ENCODE measurements at regions of chr20 and their contacts with region 1.

Region 1: DNA sequence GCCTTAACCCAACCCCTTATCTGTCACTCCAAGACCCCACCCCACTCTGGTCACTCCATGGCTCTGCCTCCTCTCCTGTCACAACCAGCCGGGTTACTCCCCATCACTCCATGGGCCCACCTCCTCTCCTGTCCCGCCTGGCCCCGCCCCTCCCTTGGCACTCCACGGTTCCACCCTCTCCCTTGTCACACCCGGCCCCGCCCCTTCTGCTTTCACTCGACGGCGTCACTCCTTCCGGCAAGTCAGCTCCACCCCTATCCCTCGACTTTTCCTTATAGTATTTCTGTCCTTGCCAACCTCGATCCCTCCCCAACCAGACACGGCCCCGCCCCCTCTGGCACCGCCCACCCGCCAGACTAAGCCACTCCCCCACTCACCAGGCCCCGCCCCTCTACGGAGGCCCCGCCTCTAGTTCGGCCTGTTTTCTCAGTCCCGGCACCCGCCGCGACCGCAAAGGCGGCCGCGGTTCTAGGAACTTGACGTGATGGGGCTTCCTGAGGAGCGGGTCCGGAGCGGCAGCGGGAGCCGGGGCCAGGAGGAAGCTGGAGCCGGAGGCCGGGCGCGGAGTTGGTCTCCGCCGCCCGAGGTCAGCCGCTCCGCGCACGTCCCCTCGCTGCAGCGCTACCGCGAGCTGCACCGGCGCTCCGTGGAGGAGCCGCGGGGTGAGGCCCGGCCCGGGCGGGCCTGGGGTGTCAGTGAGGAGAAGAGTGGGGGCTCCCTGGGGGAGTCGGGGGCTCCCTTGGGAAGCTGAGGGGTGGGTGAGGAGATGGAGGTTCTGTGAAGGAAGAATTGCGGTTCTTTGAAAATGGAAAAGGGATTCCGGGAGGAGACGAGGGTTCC is at the start of gene ACSS2:
- DNase-seq: peak; percentile 78 to 93 (median 92)
- H3K4me3 ChIP-seq: peak within 1 kb of the TSS; percentile 67
- H3K4me3 Mint-ChIP-seq: peak within 1 kb of the TSS; percentile 85 to 93 (median 88)
- H3K27ac ChIP-seq: peak within 1 kb of the TSS; percentile 59
- H3K27ac Mint-ChIP-seq: peak within 1 kb of the TSS; percentile 0 to 96 (median 83)
- H3K4me1 ChIP-seq: peaks cover 51% of the 10 kb centered on the region
- H3K4me1 Mint-ChIP-seq: peaks cover 47 to 56% (median 50%) of the 10 kb centered on the region in 3 donors
- H3K27me3 ChIP-seq: no peaks in the 10 kb centered on the region
- H3K27me3 Mint-ChIP-seq: peaks cover 0 to 4% of the 10 kb centered on the region in 2 donors
- total RNA-seq, gene ACSS2: 6.0 to 7.2 TPM

Region 2: GRCh38 chr20:34736106-34736735 is 140.2 kb before region 1 on chr20:
- CTCF ChIA-PET with region 1: no interaction called
- POLR2A ChIA-PET with region 1: no interaction called
- DNase-seq: no peak
- H3K4me3 ChIP-seq: no peak overlapping the region
- H3K4me3 Mint-ChIP-seq: no peak overlapping the region
- H3K27ac ChIP-seq: no peak overlapping the region
- H3K27ac Mint-ChIP-seq: no peak overlapping the region
- H3K4me1 ChIP-seq: no peaks in the 10 kb centered on the region
- H3K4me1 Mint-ChIP-seq: no peaks in the 10 kb centered on the region
- H3K27me3 ChIP-seq: no peaks in the 10 kb centered on the region
- H3K27me3 Mint-ChIP-seq: peaks cover 0 to 3% of the 10 kb centered on the region in 2 donors

Region 3: GRCh38 chr20:35232575-35232974 is 356.2 kb after region 1 on chr20:
- CTCF ChIA-PET with region 1: interaction called, 3 read pairs
- POLR2A ChIA-PET with region 1: interaction called, 11 read pairs
- DNase-seq: no peak
- H3K4me3 ChIP-seq: no peak overlapping the region
- H3K4me3 Mint-ChIP-seq: no peak overlapping the region
- H3K27ac ChIP-seq: no peak overlapping the region
- H3K27ac Mint-ChIP-seq: no peak overlapping the region
- H3K4me1 ChIP-seq: no peaks in the 10 kb centered on the region
- H3K4me1 Mint-ChIP-seq: peaks cover 0 to under 1% (median under 1%) of the 10 kb centered on the region in 3 donors
- H3K27me3 ChIP-seq: peaks cover under 1% of the 10 kb centered on the region
- H3K27me3 Mint-ChIP-seq: peaks cover 16 to 33% of the 10 kb centered on the region in 2 donors